ENCODE measurements at regions of chr12 and their contacts with region 1.

Region 1: GRCh38 chr12:114703060-114703493 is 19.1 kb upstream of the TBX3 start:
- DNase-seq: no peak
- ATAC-seq: 0 out of 2 replicates have a peak, but pooled peaks have one; percentile 42
- H3K4me3 ChIP-seq: no peak overlapping the region
- H3K27ac ChIP-seq: no peak overlapping the region
- H3K4me1 ChIP-seq: peaks cover 6% of the 10 kb centered on the region; the same call in 1 of the 2 replicates
- H3K27me3 ChIP-seq: no peaks in the 10 kb centered on the region
- CTCF ChIP-seq: no peak

Region 2: DNA sequence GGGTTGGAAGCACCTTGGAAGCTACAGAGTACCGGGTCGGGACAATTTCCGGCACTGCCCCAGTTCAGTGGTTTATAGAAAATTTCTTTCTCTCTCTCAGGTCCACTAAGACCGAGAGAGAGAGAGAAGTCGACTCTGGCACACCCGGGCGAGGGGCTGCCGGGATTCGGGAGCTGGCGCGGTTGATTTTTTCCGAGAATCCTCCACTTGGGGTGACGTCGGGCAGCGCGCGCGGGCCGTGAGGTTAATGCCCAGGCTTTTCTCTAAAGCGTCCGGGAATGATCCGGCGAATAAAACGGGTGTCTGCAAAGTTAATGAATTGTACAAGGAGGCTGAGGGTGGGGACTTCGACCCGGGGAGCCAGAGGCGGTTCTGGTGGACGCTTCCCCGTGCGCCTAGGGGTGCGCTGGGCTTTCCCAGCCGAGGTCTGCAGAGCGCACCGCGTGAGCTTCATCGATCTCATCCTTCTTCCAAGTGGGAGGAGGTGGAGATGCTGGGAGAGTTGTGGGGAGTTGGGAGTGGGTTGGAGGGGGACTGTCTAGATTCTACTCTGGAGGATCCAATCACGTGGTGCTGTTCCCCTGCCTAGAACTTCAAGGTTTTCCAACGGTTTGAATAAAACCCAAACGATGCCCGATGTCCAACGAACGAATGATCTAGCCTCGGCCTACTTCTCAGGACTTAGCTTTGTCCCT is 32.8 kb after region 1 on chr12:
- CTCF ChIA-PET with region 1: no interaction called
- POLR2A ChIA-PET with region 1: interaction called, 18 read pairs
- intact Hi-C with region 1: no loop called
- DNase-seq: no peak
- ATAC-seq: no peak
- H3K4me3 ChIP-seq: no peak overlapping the region
- H3K27ac ChIP-seq: no peak overlapping the region
- H3K4me1 ChIP-seq: peaks cover 7% of the 10 kb centered on the region; the same call in 1 of the 2 replicates
- H3K27me3 ChIP-seq: no peaks in the 10 kb centered on the region
- CTCF ChIP-seq: no peak

Region 3: DNA sequence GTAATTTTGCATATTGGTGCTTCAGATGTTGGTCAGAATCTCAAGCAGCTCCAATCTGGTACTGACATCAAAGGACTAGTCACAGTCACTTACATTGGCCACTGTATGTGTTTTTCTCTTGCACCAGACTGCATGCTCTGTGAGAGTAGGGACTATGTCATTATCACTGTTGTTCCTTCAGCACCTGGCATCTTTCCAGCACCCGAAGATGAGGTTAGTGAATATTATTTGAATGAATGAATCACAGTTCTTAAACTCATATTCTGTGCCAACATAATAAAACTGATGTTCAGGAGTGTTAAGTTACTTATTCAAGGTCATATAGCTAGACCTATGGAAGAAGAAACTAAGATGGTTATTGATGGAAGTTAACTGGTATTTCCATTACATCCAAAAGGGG is 185.4 kb after region 1 on chr12:
- CTCF ChIA-PET with region 1: no interaction called
- POLR2A ChIA-PET with region 1: no interaction called
- intact Hi-C with region 1: no loop called
- DNase-seq: peak; percentile 94
- ATAC-seq: peak; percentile 66
- H3K4me3 ChIP-seq: no peak overlapping the region
- H3K27ac ChIP-seq: no peak overlapping the region
- H3K4me1 ChIP-seq: peaks cover 32% of the 10 kb centered on the region
- H3K27me3 ChIP-seq: no peaks in the 10 kb centered on the region
- CTCF ChIP-seq: no peak